Heart left ventricle (tissue), 16 donors: ENCODE measurements at regions of chr14 and their contacts with region 1.

Region 1: GRCh38 chr14:92686900-92687444 is 61.5 kb downstream of the LGMN start:
- DNase-seq: peak; percentile 66 to 89 (median 77)
- ATAC-seq: peak; percentile 62 to 88 (median 82)
- H3K4me3 ChIP-seq: peak overlapping the region; percentile 28 to 58 (median 48)
- H3K27ac ChIP-seq: peak overlapping the region in 3 of 12 donors; percentile 27 to 54 (median 44)
- H3K4me1 ChIP-seq: peaks cover 0 to 22% (median 10%) of the 10 kb centered on the region in 12 donors
- H3K27me3 ChIP-seq: no peaks in the 10 kb centered on the region
- CTCF ChIP-seq: peak; percentile 85 to 100 (median 99)
- POLR2A ChIP-seq: no peak

Region 2: DNA sequence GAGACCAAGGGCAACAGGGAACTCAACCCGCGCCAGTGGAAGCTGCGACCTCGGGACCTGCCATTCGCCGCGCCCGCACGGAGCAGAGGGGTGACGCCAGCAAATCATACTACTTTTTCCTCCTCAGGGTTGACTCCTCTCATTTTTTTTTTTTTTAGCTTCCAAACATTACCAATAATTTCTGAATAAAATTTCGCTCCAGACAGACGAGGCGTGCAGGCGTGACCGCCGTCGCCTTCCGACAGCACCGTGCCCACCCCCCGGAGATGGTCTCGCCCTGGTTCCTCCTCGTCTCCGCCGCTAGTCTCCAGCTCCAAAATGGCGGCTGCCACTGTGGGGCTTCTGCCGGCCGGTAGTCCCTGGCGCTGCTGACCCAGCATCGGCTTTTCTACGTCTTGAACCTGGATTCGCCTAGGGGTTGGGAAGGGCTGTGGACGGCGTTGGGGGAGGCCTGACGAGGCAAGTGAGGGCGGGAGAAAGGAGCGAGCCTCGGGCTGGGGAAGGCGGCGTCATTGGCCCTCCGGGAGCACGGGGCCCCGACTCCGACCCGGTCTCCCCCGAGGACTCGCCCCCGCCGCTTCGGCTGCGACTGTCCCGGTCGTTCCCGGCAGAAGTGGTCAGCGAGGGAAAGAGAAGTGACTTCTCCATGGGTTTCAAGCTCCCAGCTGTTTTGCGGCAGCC is 565.2 kb before region 1 on chr14 and contains the starts of genes CPSF2 and NDUFB1:
- intact Hi-C with region 1: loop called in 4 of 10 experiments (anchors 5 to 10 kb)
- DNase-seq: peak; percentile 88 to 91 (median 90)
- ATAC-seq: peak; percentile 91 to 95 (median 94)
- H3K4me3 ChIP-seq: peak within 1 kb of the TSS; percentile 59 to 97 (median 86)
- H3K27ac ChIP-seq: peak within 1 kb of the TSS; percentile 91 to 99 (median 96)
- H3K4me1 ChIP-seq: peaks cover 0 to 62% (median 33%) of the 10 kb centered on the region in 12 donors
- H3K27me3 ChIP-seq: no peaks in the 10 kb centered on the region
- CTCF ChIP-seq: peak in 1 of 12 donors; percentile 17
- POLR2A ChIP-seq: peak in 1 of 2 donors; percentile 57
- total RNA-seq, gene CPSF2: 24.5 to 51.7 (median 44.2) TPM
- total RNA-seq, gene NDUFB1: 295 to 1,551 (median 438) TPM

Region 3: DNA sequence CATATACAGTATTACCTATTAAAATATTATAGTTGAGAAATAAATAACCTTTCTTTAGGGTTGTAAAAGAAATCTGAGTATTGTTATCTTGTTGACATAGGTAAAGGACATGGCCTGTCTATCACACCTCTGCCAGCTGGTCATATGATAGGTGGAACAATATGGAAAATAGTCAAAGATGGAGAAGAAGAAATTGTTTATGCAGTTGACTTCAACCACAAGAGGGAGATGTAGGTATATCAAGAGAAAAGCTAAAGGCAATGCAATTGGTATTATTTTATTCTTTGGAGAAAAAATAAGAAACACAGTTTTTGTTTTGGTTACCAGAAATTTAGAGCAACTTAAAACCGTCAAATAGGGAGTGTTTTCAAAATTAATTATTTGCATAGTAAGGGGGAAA is 551.7 kb before region 1 on chr14:
- intact Hi-C with region 1: loop called in 2 of 10 experiments (anchors 10 kb)
- DNase-seq: no peak
- ATAC-seq: no peak
- H3K4me3 ChIP-seq: no peak overlapping the region
- H3K27ac ChIP-seq: no peak overlapping the region
- H3K4me1 ChIP-seq: peaks cover 0 to 3% (median 0%) of the 10 kb centered on the region in 12 donors
- H3K27me3 ChIP-seq: no peaks in the 10 kb centered on the region
- CTCF ChIP-seq: peak; percentile 26 to 60 (median 46)
- POLR2A ChIP-seq: no peak

Region 4: DNA sequence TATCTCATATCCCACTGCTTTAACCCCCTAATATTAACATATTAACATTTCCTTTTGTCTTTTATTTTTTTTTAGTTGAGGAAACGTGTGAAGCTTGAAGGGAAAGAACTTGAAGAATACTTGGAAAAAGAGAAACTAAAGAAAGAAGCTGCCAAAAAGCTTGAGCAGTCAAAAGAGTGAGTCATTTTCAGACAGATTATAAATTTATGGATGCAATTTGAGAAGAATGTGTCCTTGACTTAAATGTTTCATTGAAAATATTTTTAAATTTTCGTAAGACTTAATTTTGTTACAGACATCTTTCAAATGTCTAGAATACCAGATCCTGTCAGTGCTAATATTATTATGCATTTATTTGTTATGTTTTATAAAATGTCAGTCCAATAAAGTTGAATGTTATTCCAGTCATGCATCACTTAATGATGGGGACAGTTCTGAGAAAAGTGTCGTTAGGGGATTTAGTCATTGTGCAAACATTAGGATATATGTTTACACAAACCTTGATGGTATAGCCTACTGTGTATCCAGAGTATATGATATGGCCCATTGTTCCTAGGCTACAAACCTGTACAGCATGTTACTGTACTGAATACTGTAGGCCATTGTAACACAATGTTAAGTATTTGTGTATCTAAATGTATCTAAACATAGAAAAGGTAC is 532.6 kb before region 1 on chr14:
- intact Hi-C with region 1: loop called in 1 of 10 experiments (anchors 10 kb)
- DNase-seq: no peak
- ATAC-seq: no peak
- H3K4me3 ChIP-seq: no peak overlapping the region
- H3K27ac ChIP-seq: no peak overlapping the region
- H3K4me1 ChIP-seq: no peaks in the 10 kb centered on the region
- H3K27me3 ChIP-seq: no peaks in the 10 kb centered on the region
- CTCF ChIP-seq: no peak
- POLR2A ChIP-seq: no peak

Region 5: GRCh38 chr14:92563359-92563758 is 123.6 kb before region 1 on chr14:
- intact Hi-C with region 1: no loop called
- DNase-seq: no peak
- ATAC-seq: peak in 3 of 4 donors; percentile 34 to 36 (median 36)
- H3K4me3 ChIP-seq: no peak overlapping the region
- H3K27ac ChIP-seq: peak overlapping the region in 5 of 12 donors; percentile 15 to 82 (median 31)
- H3K4me1 ChIP-seq: peaks cover 0 to 49% (median 8%) of the 10 kb centered on the region in 12 donors
- H3K27me3 ChIP-seq: no peaks in the 10 kb centered on the region
- CTCF ChIP-seq: no peak
- POLR2A ChIP-seq: no peak

Region 6: GRCh38 chr14:92585981-92586937 is 100.7 kb before region 1 on chr14:
- intact Hi-C with region 1: loop called in 1 of 10 experiments (anchors 5 kb)
- DNase-seq: peak in 1 of 5 donors; percentile 32
- ATAC-seq: peak in 3 of 4 donors; percentile 68 to 83 (median 75)
- H3K4me3 ChIP-seq: peak overlapping the region in 1 of 12 donors; percentile 2
- H3K27ac ChIP-seq: peak overlapping the region in 8 of 12 donors; percentile 4 to 80 (median 64)
- H3K4me1 ChIP-seq: peaks cover 0 to 82% (median 22%) of the 10 kb centered on the region in 12 donors
- H3K27me3 ChIP-seq: no peaks in the 10 kb centered on the region
- CTCF ChIP-seq: no peak
- POLR2A ChIP-seq: no peak

Region 7: DNA sequence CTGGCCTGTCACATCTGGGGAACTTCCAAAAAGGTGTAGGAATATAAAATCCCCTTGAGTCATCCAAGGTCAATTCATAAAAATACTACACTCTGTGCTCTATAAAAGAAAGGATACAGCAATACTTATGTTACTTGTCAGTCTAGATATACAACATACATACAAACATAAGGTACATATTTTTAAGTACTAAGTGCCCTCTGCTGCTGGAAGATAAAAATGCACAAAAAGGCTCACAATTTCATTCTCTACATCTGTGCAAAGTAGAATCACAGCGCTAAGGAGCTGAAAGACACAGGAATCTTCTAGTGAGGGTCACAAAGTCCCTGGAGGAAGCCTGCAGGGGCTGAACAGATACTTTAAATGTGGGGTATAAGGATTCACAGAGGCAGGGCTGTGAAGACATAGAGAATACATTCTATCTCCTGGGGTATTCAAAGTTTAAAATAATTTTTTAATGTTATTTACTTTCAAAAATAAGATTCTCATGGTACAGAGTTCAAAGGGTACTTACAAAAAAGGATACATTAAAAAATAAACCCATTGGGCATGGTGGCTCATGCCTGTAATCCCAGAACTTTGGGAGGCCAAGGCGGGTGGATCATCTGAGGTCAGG is 97.0 kb after region 1 on chr14:
- intact Hi-C with region 1: loop called in 4 of 10 experiments (anchors 5 to 10 kb)
- DNase-seq: peak in 1 of 5 donors; percentile 20
- ATAC-seq: peak in 3 of 4 donors; percentile 45 to 64 (median 58)
- H3K4me3 ChIP-seq: no peak overlapping the region
- H3K27ac ChIP-seq: no peak overlapping the region
- H3K4me1 ChIP-seq: peaks cover 0 to 32% (median 7%) of the 10 kb centered on the region in 12 donors
- H3K27me3 ChIP-seq: no peaks in the 10 kb centered on the region
- CTCF ChIP-seq: peak; percentile 25 to 77 (median 58)
- POLR2A ChIP-seq: no peak